PC-9 (cell line): ENCODE measurements at regions of chr12 and their contacts with region 1.

Region 1: DNA sequence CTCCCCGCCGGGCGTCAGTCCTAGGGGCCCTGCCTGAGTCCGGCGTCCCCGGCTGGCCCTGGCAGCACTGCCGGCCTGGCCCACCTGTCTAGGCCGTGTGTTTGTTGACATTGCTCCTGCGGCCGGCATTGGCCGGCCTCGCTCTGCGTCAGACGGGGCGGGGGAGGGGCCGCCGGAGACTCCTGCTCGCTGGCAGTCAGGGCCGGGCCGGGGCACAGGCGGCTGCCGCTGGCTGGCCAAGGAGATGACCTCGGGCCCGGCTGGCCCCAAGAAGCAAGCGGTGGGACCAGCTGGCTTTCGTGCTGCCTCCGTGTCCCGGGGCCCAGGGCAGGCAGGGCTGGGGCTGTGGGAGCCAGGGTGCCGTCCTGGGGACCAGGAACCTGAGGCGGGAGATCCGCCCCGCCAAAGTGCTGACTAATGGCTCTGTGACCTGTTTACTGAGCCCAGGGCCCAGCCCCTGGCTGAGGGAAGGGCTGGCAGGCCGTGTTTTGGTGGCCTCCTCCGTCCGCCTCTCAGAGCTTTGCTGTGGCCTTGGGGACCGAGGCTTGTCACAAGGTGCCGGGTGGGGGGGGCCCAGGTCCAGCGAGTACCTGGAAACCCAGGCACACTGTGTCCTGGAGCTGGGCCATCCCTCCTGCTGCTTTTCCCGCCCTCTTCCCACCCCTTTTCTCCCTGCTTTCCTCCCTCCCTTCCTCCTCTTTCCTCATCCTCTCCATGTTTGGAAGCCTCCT is 1.8 kb downstream of the ULK1 start:
- DNase-seq: peak; percentile 86 to 88
- H3K4me3 ChIP-seq: peak overlapping the region; percentile 94
- H3K27ac ChIP-seq: peak overlapping the region; percentile 86
- H3K4me1 ChIP-seq: peaks cover 15% of the 10 kb centered on the region
- H3K27me3 ChIP-seq: no peaks in the 10 kb centered on the region
- CTCF ChIP-seq: no peak

Region 2: GRCh38 chr12:131379738-131380137 is 516.5 kb before region 1 on chr12:
- CTCF ChIA-PET with region 1: no interaction called
- POLR2A ChIA-PET with region 1: no interaction called
- intact Hi-C with region 1: no loop called
- DNase-seq: no peak
- H3K4me3 ChIP-seq: no peak overlapping the region
- H3K27ac ChIP-seq: no peak overlapping the region
- H3K4me1 ChIP-seq: no peaks in the 10 kb centered on the region
- H3K27me3 ChIP-seq: peaks cover 87% of the 10 kb centered on the region
- CTCF ChIP-seq: no peak

Region 3: GRCh38 chr12:131860562-131861291 is 35.5 kb before region 1 on chr12:
- CTCF ChIA-PET with region 1: no interaction called
- POLR2A ChIA-PET with region 1: no interaction called
- intact Hi-C with region 1: loop called (anchors 1 kb)
- DNase-seq: peak; percentile 94 to 95
- H3K4me3 ChIP-seq: peak overlapping the region; percentile 43; the same call in 1 of the 2 replicates
- H3K27ac ChIP-seq: peak overlapping the region; percentile 94
- H3K4me1 ChIP-seq: peaks cover 74% of the 10 kb centered on the region
- H3K27me3 ChIP-seq: no peaks in the 10 kb centered on the region
- CTCF ChIP-seq: no peak

Region 4: GRCh38 chr12:131872185-131873051 is 23.8 kb before region 1 on chr12:
- CTCF ChIA-PET with region 1: no interaction called
- POLR2A ChIA-PET with region 1: no interaction called
- intact Hi-C with region 1: loop called (anchors 1 kb)
- DNase-seq: peak; percentile 93 to 99
- H3K4me3 ChIP-seq: 0 out of 2 replicates have a peak overlapping the region, but pooled peaks have one; percentile 37
- H3K27ac ChIP-seq: peak overlapping the region; percentile 62
- H3K4me1 ChIP-seq: peaks cover 68% of the 10 kb centered on the region
- H3K27me3 ChIP-seq: no peaks in the 10 kb centered on the region
- CTCF ChIP-seq: no peak

Region 5: DNA sequence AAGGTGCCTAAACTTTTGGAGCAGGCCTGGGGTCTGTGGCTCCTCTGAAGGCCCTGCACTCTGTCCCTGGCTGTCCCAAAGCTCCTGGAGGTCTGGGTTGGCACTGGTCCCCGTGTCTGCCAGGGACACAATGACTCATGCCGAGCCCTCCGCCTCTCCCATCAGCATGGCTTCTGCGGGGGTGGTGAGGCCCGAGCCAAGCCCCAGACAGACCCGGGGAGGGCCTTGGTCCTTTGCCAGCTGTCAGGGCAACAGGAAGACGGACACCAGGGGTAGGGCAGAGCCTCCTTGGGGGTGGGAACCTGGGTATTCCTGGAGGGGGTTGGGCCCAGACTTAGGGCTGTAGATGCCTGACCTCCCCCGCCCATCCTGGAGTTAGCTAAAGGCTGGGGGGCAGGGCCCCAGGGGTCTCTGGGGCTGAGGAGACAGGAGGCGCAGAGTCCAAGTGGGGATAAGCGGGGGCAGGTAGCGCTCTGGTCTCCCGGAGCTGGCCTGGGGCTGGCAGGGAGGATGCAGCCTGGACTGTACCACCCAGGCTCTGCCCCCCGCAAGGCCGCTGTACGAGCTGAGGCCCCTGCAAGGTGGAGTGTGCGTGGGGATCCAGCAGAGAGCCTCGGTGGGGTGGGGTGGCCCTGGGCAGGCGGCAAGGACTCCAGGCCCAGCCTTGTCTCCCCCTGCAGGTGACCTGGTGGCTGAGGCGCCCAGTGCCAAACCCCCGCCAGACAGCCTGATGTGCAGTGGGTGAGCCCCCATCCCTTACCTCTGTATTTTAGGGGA is 16.5 kb after region 1 on chr12:
- CTCF ChIA-PET with region 1: no interaction called
- POLR2A ChIA-PET with region 1: no interaction called
- intact Hi-C with region 1: loop called (anchors 2 kb)
- DNase-seq: peak in 1 of 2 experiments; percentile 74
- H3K4me3 ChIP-seq: no peak overlapping the region
- H3K27ac ChIP-seq: no peak overlapping the region
- H3K4me1 ChIP-seq: no peaks in the 10 kb centered on the region
- H3K27me3 ChIP-seq: no peaks in the 10 kb centered on the region
- CTCF ChIP-seq: no peak; the same call in 1 of the 2 replicates

Region 6: GRCh38 chr12:131949431-131950181 is 53.4 kb after region 1 on chr12 and contains the start of gene EP400:
- CTCF ChIA-PET with region 1: no interaction called
- POLR2A ChIA-PET with region 1: no interaction called
- intact Hi-C with region 1: loop called (anchors 2 kb)
- DNase-seq: peak; percentile 81 to 92
- H3K4me3 ChIP-seq: peak within 1 kb of the TSS; percentile 94
- H3K27ac ChIP-seq: 0 out of 2 replicates have a peak within 1 kb of the TSS, but pooled peaks have one; percentile 15
- H3K4me1 ChIP-seq: peaks cover 7% of the 10 kb centered on the region; the same call in 1 of the 2 replicates
- H3K27me3 ChIP-seq: no peaks in the 10 kb centered on the region
- CTCF ChIP-seq: no peak; the same call in 1 of the 2 replicates
- total RNA-seq, gene EP400: 45.0 and 50.3 TPM in 2 replicates